ENCODE measurements at regions of chr5 and their contacts with region 1.

Region 1: DNA sequence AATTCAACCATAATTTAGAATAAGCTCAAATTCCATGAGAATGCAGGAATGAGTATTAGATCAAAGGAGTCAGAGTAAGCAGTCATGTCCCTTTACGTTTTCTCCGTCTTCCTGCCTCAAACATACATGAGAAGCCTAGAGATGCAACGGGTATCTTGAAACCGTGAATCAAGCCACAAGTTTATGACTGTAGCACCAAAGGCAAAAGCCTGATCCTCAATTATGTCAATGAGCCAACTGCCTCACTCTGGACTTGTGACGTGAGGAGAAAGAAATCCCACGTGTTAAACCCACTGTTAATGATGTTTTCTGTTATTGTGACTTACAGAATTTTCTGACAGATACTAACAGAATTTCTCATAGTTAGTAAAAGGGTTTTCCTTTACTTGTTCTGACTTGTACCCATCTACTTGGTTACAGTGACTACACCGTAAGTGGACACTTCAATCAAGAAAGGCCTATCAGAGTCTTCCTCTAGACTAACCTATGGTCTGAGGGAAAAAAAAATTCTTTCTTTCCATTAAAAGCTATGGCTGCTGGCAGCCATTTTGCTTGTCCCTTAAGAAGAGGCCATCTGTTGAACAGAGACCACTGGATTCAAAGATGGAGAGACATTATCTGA is 35.3 kb upstream of the HK3 start:
- DNase-seq: no peak
- H3K4me3 Mint-ChIP-seq: no peak overlapping the region
- H3K27ac Mint-ChIP-seq: peak overlapping the region; percentile 46
- H3K4me1 Mint-ChIP-seq: peaks cover 18% of the 10 kb centered on the region
- H3K27me3 Mint-ChIP-seq: no peaks in the 10 kb centered on the region

Region 2: DNA sequence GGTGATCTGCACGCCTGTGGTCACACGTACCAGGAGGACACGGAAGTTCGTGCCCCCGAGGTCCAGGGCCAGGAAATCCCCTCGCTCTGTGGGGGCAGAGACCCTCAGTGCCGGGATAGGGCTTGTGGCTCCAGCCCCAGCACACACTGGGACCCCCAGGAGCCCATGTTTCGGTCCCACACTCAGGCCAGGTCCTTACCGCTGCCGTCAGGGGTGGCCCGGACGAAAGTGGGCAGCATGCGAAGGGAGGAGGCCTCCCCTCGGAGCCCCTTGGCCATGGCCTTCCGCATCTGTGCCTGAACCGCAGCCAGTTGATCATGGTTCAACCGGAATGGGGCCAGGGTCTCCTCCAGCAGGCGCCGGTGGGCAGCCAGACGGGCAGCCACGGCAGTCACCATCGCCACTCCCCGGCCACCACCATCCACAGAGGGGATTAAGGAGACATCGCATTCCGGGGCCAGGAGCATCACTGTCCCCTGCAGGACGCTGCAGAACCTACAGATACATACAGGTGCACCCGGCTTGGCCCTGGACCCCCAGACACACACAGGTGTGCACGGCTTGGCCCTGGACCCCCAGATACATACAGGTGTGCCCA is 47.1 kb before region 1 on chr5:
- intact Hi-C with region 1: no loop called
- DNase-seq: no peak
- H3K4me3 Mint-ChIP-seq: no peak overlapping the region
- H3K27ac Mint-ChIP-seq: no peak overlapping the region
- H3K4me1 Mint-ChIP-seq: no peaks in the 10 kb centered on the region
- H3K27me3 Mint-ChIP-seq: peaks cover 6% of the 10 kb centered on the region

Region 3: DNA sequence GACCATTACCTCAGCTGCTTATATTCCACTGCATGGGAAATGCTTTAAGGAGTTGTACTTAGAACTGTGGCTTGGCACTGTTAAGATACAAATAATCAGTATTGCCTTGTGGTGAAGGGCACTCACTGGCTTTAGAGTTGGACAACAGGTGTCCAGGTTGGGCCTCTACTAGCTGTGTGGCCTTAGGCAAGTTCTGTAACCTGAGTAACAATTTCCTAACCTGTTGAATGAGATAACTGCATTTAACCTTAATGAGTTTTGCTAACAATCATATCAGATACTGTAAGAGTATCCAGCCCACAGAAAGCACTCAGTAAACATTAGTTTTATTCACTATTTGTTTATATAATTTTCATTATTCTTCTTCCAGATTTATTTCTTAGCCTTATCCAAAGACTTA is 18.1 kb before region 1 on chr5:
- intact Hi-C with region 1: loop called (anchors 2 kb)
- DNase-seq: no peak
- H3K4me3 Mint-ChIP-seq: no peak overlapping the region
- H3K27ac Mint-ChIP-seq: no peak overlapping the region
- H3K4me1 Mint-ChIP-seq: peaks cover 29% of the 10 kb centered on the region
- H3K27me3 Mint-ChIP-seq: no peaks in the 10 kb centered on the region

Region 4: DNA sequence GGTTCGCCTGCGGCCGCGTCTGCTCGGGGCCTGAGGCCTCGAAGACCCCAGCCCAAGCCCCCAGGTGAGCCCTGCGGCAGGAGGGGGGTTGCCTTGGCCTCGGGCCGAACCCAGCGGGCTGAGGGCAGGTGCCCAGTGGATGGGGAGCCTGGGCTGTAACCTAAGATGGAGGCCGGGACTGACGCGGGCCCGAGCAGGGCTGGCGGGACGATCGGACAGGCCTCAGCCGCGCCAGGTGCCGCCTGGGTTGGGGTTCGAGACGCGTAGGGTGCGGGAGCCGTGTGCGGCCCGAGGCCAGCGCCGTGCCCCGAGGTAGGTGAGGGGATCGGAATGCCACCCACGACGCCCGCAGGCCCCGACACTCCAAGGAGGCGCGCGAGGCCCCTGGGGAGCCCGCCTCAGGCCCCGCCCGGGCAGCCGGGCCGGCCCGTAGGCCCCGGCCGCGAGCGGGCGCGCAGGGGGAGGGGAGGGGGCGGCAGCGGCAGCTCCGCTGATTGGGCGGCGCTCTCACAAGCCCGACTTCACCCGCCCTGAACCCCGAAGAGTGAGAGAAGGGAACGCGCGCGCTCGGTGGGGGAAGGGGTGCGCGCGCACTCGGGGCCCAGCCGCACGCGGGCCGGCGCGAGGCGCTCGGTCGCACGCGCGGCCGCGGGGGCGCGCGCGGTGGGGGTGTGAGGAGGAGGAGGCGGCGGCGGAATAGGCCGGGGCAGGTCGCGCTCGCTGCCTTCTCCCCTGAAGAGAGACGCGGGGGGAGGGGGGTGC is 198.9 kb after region 1 on chr5 and contains the start of gene NSD1:
- intact Hi-C with region 1: no loop called
- DNase-seq: peak; percentile 91
- H3K4me3 Mint-ChIP-seq: peak within 1 kb of the TSS; percentile 88
- H3K27ac Mint-ChIP-seq: peak within 1 kb of the TSS; percentile 83
- H3K4me1 Mint-ChIP-seq: peaks cover 36% of the 10 kb centered on the region
- H3K27me3 Mint-ChIP-seq: no peaks in the 10 kb centered on the region
- total RNA-seq, gene NSD1: 100.0 and 103 TPM in 2 replicates